ENCODE measurements at regions of chr19 and their contacts with region 1.

Region 1: GRCh38 chr19:46346821-46347571 is at the start of gene PPP5C:
- DNase-seq: peak; percentile 86 to 93
- H3K4me3 ChIP-seq: peak within 1 kb of the TSS; percentile 97
- H3K27ac ChIP-seq: peak within 1 kb of the TSS; percentile 20; the same call in 1 of the 2 replicates
- H3K4me1 ChIP-seq: peaks cover 12% of the 10 kb centered on the region
- H3K27me3 ChIP-seq: peaks cover 13% of the 10 kb centered on the region
- CTCF ChIP-seq: peak; percentile 97
- total RNA-seq, gene PPP5C: 74.7 and 85.4 TPM in 2 replicates

Region 2: DNA sequence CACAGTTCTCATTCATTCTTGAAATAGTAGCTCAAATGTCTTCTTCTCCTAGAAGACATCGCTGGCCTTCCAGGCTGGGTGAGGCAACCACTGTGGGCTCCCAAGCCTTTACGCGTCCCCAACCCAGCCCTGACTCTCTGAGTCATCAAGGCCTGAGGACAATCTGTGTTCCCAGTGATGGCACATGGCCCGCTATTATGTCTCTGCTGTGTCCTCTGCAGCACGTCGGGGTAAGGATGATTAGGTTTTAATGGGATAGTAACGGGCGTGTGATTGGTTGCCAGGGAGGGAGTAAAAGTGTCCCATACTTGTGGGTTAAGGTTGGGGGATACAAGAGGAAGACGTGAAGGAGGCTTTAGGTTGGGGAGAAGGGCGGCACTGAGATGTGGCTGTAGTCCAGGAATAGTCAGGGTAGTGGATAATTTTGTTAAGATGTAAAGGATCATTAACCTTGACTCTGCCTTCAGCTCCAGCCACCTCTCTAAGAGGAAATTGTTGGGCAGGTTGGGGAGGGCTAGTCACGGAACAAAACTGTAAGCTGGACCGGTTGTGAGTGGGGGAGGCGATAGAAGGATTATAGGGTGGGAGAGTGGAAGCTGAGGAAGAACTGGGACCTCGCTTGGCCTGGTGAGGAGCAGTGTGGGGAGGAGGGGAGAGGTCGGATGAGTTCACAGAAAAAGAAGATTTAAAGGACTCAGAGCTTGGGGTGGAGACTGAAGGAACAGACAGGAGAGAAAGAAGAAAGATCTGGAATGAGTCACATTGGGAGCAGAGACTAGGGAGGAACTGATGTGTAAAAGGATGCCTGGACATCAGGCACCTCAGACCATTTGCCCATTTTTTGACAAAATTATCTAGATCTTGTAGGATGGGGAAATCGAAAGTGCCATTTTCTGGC is 145.3 kb before region 1 on chr19:
- CTCF ChIA-PET with region 1: no interaction called
- POLR2A ChIA-PET with region 1: no interaction called
- intact Hi-C with region 1: no loop called
- DNase-seq: peak; percentile 78 to 90
- H3K4me3 ChIP-seq: peak overlapping the region; percentile 65
- H3K27ac ChIP-seq: peak overlapping the region; percentile 97
- H3K4me1 ChIP-seq: peaks cover 85% of the 10 kb centered on the region
- H3K27me3 ChIP-seq: no peaks in the 10 kb centered on the region
- CTCF ChIP-seq: no peak

Region 3: GRCh38 chr19:46256855-46257254 is 90.1 kb before region 1 on chr19:
- CTCF ChIA-PET with region 1: interaction called, 12 read pairs
- POLR2A ChIA-PET with region 1: no interaction called
- intact Hi-C with region 1: no loop called
- DNase-seq: peak in 1 of 2 experiments; percentile 50
- H3K4me3 ChIP-seq: no peak overlapping the region
- H3K27ac ChIP-seq: peak overlapping the region; percentile 49
- H3K4me1 ChIP-seq: peaks cover 75% of the 10 kb centered on the region
- H3K27me3 ChIP-seq: no peaks in the 10 kb centered on the region
- CTCF ChIP-seq: no peak

Region 4: DNA sequence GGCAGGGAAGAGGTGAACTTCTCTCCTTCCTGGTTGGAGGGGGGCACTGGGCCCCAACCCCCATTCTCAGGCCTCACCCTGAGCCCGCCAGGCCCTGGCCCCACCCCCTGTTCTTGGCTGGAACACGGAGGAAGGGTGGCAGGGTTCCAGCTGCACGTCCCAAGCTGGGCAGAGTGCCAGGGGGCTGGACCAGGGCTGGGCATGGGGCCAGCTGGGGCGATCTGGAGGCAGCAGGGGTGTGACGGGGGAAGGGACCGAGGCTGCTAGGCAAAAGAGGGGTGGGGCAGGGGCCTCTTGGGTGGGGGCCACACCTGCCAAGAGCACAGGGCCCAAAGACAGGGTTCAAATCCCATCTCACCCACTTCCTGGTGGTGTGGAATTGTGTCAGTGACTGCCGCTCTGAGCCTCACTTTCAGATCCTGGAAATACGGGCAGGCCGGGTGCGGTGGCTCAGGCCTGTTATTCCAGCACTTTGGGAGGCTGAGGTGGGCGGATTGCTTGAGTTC is 47.9 kb before region 1 on chr19:
- CTCF ChIA-PET with region 1: no interaction called
- POLR2A ChIA-PET with region 1: no interaction called
- intact Hi-C with region 1: loop called (anchors 2 kb)
- DNase-seq: peak; percentile 74 to 98
- H3K4me3 ChIP-seq: no peak overlapping the region; the same call in 1 of the 2 replicates
- H3K27ac ChIP-seq: no peak overlapping the region
- H3K4me1 ChIP-seq: peaks cover 29% of the 10 kb centered on the region
- H3K27me3 ChIP-seq: peaks cover 6% of the 10 kb centered on the region; the same call in 1 of the 2 replicates
- CTCF ChIP-seq: no peak

Region 5: DNA sequence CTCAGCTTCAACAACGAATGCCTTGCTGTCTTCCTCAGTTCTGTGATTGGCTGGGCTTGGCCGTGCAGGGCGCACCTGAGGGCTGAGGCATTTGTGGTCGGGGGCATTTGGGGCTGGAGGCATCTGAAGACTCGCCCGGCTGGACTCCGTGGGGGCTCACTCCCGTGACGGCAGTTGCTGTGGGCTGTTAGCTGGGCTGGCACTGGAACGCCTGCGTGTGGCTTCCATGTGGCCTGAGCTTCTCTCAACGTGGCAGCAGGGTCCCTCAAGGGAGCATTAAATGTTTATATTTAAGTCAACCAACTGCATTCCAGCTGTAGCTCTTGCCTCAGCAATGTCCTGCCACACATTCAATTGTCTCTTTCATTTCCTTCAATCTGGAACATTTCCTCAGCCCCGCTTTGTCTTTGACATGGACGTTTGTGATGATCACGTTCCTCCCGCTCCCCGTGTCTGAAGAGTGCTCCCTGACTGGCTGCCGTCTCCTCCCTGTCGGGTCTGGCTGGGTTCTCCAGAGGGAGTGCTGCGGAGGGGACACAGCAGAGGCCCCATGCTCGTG is 45.3 kb after region 1 on chr19:
- CTCF ChIA-PET with region 1: interaction called, 4 read pairs
- POLR2A ChIA-PET with region 1: no interaction called
- intact Hi-C with region 1: loop called (anchors 1 kb)
- DNase-seq: no peak
- H3K4me3 ChIP-seq: no peak overlapping the region
- H3K27ac ChIP-seq: no peak overlapping the region
- H3K4me1 ChIP-seq: no peaks in the 10 kb centered on the region
- H3K27me3 ChIP-seq: no peaks in the 10 kb centered on the region
- CTCF ChIP-seq: no peak

Region 6: DNA sequence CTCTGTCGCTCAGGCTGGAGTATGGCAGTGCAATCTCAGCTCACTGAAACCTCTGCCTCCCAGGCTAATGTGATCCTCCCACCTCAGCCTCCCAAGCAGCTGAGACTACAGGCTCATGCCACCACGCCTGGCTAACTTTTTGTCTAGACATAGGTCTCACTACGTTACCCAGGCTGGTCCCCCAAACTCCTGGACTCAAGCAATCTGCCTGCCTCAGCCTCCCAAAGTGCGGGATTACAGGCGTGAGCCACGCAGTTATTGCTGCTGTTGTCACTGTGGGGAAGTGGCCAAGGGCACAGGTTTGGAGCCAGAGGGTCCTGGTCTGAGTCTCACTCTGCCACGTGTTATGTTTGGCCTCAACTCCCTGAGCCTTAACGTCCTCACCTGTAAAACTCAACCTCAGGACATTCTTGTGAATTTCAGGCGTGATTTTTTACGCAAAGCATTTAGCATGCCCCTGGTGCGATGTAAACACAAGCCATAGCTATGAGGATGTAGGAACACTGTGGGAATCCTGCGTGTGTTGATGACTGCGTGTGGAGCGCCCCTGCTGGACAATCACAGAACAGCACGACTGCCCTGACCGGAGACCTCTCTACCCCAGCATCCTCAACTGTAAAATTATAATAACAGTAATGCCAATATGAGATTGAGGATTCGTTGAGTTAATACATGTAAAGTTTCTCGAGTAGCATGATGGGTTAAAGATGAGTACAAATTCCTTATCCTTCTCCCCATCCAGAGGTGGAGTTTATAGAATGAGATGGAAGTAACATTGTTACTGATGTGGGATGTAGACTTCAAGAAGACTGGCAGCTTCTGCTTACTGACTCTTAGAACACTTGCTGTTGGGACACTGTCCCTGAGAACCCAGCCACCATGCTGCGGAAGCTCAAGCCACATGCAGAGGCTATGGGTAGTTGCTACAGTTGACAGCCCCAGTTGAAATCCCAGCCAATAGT is 190.4 kb after region 1 on chr19:
- CTCF ChIA-PET with region 1: interaction called, 10 read pairs
- POLR2A ChIA-PET with region 1: no interaction called
- intact Hi-C with region 1: no loop called
- DNase-seq: peak in 1 of 2 experiments; percentile 33
- H3K4me3 ChIP-seq: no peak overlapping the region
- H3K27ac ChIP-seq: no peak overlapping the region
- H3K4me1 ChIP-seq: no peaks in the 10 kb centered on the region
- H3K27me3 ChIP-seq: peaks cover 14% of the 10 kb centered on the region
- CTCF ChIP-seq: peak; percentile 96

Region 7: DNA sequence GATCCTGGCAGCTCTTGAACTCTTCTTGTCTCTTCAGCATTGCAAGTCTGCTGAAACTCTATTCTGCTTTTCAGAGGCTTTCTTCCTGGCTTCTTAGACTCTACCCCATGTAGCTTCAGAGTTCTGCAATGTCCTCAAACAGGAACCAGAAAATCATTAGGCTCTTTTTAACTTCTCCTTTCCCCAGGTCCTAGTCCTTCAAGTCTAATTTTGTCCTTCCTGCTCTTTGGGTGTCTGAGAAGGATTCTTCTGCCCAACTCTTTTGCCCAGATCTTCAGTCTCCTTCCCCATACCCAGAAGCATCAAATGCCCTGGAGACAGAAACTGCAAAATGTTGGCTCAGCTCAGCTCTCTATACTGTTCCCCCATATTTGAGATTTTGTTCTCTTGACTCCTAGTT is 204.2 kb after region 1 on chr19:
- CTCF ChIA-PET with region 1: no interaction called
- POLR2A ChIA-PET with region 1: no interaction called
- intact Hi-C with region 1: no loop called
- DNase-seq: no peak
- H3K4me3 ChIP-seq: no peak overlapping the region
- H3K27ac ChIP-seq: no peak overlapping the region
- H3K4me1 ChIP-seq: peaks cover 3% of the 10 kb centered on the region
- H3K27me3 ChIP-seq: no peaks in the 10 kb centered on the region
- CTCF ChIP-seq: no peak

Region 8: DNA sequence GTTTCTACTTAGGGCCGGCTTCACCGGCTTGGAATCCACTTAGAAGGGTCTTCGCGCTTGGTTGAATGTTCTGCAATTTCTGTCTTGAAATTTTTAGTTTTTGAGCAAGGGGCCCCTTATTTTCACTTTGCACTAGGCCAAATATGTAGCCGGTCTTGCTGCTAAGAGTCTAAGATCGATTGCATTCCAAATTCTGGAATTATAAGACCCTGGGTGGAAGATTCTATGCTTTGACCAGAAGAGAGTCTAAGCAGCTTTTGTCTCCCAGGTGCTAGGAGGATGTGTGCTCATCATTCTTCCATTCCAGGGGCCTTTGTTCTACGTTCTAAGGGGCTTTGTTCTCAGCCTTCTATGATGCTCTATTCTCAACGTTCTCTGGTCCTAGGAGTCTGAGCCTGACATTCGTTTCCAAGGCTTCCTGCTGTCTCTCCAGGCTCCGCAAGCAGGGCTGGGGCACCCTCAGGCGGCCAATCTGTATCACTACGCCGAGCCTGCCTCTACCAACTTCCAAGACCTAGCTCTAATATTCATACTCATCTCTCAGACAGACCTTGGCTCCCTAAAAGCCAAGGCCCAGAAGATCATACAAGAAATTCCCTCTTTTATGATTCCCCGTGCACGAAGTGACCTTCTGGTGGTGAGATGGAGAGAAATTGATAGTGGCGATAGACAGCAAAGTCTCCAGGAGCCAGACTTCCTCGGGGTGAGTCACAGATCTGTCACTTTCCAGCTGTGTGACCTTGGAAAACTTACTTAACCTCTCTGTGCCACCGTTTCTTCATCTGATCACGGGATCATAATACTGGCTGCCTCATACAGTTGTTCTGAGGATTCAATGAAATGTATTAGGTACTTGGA is 315.0 kb after region 1 on chr19:
- CTCF ChIA-PET with region 1: no interaction called
- POLR2A ChIA-PET with region 1: no interaction called
- intact Hi-C with region 1: no loop called
- DNase-seq: peak; percentile 80 to 81
- H3K4me3 ChIP-seq: peak overlapping the region; percentile 54
- H3K27ac ChIP-seq: no peak overlapping the region
- H3K4me1 ChIP-seq: peaks cover 12% of the 10 kb centered on the region
- H3K27me3 ChIP-seq: peaks cover 31% of the 10 kb centered on the region
- CTCF ChIP-seq: peak; percentile 93

Region 9: GRCh38 chr19:46944918-46945628 is 598.1 kb after region 1 on chr19:
- CTCF ChIA-PET with region 1: no interaction called
- POLR2A ChIA-PET with region 1: no interaction called
- intact Hi-C with region 1: loop called (anchors 5 kb)
- DNase-seq: no peak
- H3K4me3 ChIP-seq: no peak overlapping the region
- H3K27ac ChIP-seq: peak overlapping the region; percentile 36; the same call in 1 of the 2 replicates
- H3K4me1 ChIP-seq: peaks cover 17% of the 10 kb centered on the region
- H3K27me3 ChIP-seq: no peaks in the 10 kb centered on the region
- CTCF ChIP-seq: no peak